ENCODE measurements at regions of chr12 and their contacts with region 1.

Region 1: GRCh38 chr12:13211859-13212664 is 15.5 kb downstream of the EMP1 start:
- DNase-seq: no peak
- H3K4me3 ChIP-seq: no peak overlapping the region
- H3K27ac ChIP-seq: no peak overlapping the region
- H3K4me1 ChIP-seq: peaks cover 33 to 49% (median 37%) of the 10 kb centered on the region in 4 donors
- H3K27me3 ChIP-seq: no peaks in the 10 kb centered on the region
- CTCF ChIP-seq: peak; percentile 74 to 79 (median 78)
- EP300 ChIP-seq: no peak
- POLR2A ChIP-seq: no peak

Region 2: GRCh38 chr12:12916135-12916944 is 295.7 kb before region 1 on chr12:
- intact Hi-C with region 1: loop called (anchors 1 kb)
- DNase-seq: peak; percentile 97
- H3K4me3 ChIP-seq: peak overlapping the region in 3 of 4 donors; percentile 7 to 20 (median 19)
- H3K27ac ChIP-seq: peak overlapping the region; percentile 27 to 43 (median 32)
- H3K4me1 ChIP-seq: peaks cover 7 to 19% (median 10%) of the 10 kb centered on the region in 4 donors
- H3K27me3 ChIP-seq: no peaks in the 10 kb centered on the region
- CTCF ChIP-seq: peak; percentile 95 to 99 (median 96)
- EP300 ChIP-seq: no peak
- POLR2A ChIP-seq: no peak

Region 3: DNA sequence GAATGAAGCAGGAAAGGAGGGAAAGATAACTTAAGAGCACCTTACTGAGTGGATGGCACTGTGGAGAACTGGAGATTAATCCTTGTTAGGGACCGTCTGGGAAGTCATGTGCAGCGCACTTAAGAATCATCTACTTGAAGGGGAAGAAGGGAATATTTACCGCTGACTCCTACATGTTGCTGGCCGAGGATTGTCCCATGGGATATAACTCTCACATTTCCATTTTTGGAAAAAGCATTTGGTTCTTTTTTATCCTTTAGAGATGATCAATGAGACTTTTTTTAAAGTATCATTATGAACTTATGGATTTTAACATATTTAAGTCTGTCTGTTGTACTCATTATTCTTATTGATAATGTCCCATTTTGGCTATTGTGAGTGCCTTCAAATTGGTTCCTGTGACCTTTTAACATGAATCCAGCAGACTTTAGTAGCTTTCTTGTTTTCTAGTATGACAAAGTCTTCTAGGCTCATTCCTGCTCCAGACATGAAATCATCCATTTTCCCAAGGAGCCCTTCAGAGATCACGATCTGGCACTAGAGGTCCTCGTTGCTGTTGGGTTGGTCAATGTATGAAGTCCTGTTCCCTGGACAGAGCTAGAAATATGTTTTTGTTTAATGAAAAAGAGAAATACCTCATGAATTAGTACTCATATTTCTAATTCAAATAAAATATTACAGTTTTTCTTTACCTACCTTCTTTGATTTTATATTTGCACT is 188.1 kb before region 1 on chr12:
- intact Hi-C with region 1: loop called (anchors 10 kb)
- DNase-seq: no peak
- H3K4me3 ChIP-seq: no peak overlapping the region
- H3K27ac ChIP-seq: no peak overlapping the region
- H3K4me1 ChIP-seq: peaks cover 0 to 16% (median 15%) of the 10 kb centered on the region in 4 donors
- H3K27me3 ChIP-seq: no peaks in the 10 kb centered on the region
- CTCF ChIP-seq: peak; percentile 9 to 36 (median 23)
- EP300 ChIP-seq: no peak
- POLR2A ChIP-seq: no peak

Region 4: GRCh38 chr12:13270817-13271216 is 58.8 kb after region 1 on chr12:
- intact Hi-C with region 1: no loop called
- DNase-seq: no peak
- H3K4me3 ChIP-seq: no peak overlapping the region
- H3K27ac ChIP-seq: no peak overlapping the region
- H3K4me1 ChIP-seq: no peaks in the 10 kb centered on the region
- H3K27me3 ChIP-seq: peaks cover 0 to 9% (median 0%) of the 10 kb centered on the region in 4 donors
- CTCF ChIP-seq: no peak
- EP300 ChIP-seq: no peak
- POLR2A ChIP-seq: no peak

Region 5: GRCh38 chr12:13390918-13391317 is 178.9 kb after region 1 on chr12:
- intact Hi-C with region 1: no loop called
- DNase-seq: peak; percentile 60
- H3K4me3 ChIP-seq: no peak overlapping the region
- H3K27ac ChIP-seq: peak overlapping the region in 2 of 4 donors; percentile 41 to 62
- H3K4me1 ChIP-seq: peaks cover 12 to 19% (median 16%) of the 10 kb centered on the region in 4 donors
- H3K27me3 ChIP-seq: no peaks in the 10 kb centered on the region
- CTCF ChIP-seq: no peak
- EP300 ChIP-seq: no peak
- POLR2A ChIP-seq: no peak

Measured in esophagus muscularis mucosa (tissue), 4 donors.